Activated T-helper 1 cell treated with anti-CD3 and anti-CD28 coated beads, Interleukin-12 subunit alpha, Interleukin-12 subunit beta, Interleukin-2, Interleukin-4 antibody, amounts not matched to agents 30 ng/mL and 10 ng/mL and 1 ng/mL, durations not matched to agents 14 hours and 24 hours and 36 hours (primary cell): ENCODE measurements at regions of chr1 and their contacts with region 1.

Region 1: GRCh38 chr1:50846224-50846839 is 113.7 kb downstream of the FAF1 start:
- DNase-seq: no peak
- H3K4me3 Mint-ChIP-seq: no peak overlapping the region
- H3K27ac Mint-ChIP-seq: no peak overlapping the region
- H3K4me1 Mint-ChIP-seq: peaks cover 13% of the 10 kb centered on the region
- H3K27me3 Mint-ChIP-seq: no peaks in the 10 kb centered on the region

Region 2: DNA sequence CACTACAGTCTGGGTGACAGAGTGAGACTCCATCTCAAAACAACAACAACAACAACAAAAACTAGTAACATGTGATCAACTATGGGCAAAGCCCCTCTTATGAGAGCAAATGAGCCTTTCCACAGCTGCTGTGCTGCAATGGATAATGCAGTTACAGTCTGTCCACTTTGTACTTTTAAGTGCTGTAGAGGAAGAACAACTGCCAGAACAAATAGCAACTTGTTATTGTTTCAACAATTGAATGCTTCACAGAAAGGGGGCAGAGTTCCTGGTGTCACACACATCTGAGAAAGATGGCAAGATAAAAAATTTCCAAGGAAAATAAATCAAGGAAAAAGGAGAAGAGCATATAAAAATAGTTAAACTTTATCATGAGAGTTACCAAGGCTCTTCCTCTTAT is 179.5 kb before region 1 on chr1:
- intact Hi-C with region 1: no loop called
- DNase-seq: no peak
- H3K4me3 Mint-ChIP-seq: no peak overlapping the region
- H3K27ac Mint-ChIP-seq: no peak overlapping the region
- H3K4me1 Mint-ChIP-seq: no peaks in the 10 kb centered on the region
- H3K27me3 Mint-ChIP-seq: no peaks in the 10 kb centered on the region

Region 3: DNA sequence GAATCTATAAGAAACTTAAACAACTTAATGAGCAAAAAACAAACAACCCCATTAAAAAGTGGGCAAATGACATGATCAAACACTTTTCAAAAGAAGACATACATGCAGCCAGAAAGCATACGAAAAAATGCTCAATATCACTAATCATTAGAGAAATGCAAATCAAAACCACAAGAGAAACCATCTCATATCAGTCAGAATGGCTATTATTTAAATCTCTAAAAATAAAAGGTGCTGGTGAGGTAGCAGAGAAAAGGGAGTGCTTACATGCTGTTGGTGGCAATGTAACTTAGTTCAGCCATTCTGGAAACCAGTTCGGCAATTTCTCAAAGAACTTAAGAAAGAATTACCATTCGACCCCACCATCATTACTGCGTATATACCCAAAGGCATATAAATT is 34.0 kb before region 1 on chr1:
- intact Hi-C with region 1: no loop called
- DNase-seq: no peak
- H3K4me3 Mint-ChIP-seq: no peak overlapping the region
- H3K27ac Mint-ChIP-seq: no peak overlapping the region
- H3K4me1 Mint-ChIP-seq: no peaks in the 10 kb centered on the region
- H3K27me3 Mint-ChIP-seq: no peaks in the 10 kb centered on the region

Region 4: DNA sequence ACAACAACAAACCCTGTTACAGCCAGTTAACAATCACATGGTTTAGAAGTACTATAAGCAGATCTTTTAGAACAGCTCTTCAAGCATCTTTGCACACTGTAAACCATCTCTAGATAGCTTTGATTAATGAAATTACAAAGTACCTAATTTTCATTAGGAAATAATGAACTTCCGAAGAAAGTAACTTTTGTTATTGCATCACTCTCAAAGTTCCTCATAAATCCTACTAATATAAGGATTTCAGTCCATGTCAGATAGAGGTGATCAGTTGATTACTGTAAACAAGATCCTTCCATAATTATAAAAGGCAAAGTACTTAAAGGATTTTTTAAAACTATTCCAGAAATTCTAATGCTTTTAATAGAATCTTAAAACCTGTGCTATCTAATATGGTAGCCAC is 55.5 kb after region 1 on chr1:
- intact Hi-C with region 1: loop called (anchors 5 kb)
- DNase-seq: no peak
- H3K4me3 Mint-ChIP-seq: no peak overlapping the region
- H3K27ac Mint-ChIP-seq: no peak overlapping the region
- H3K4me1 Mint-ChIP-seq: no peaks in the 10 kb centered on the region
- H3K27me3 Mint-ChIP-seq: no peaks in the 10 kb centered on the region